ENCODE measurements at regions of chr15 and their contacts with region 1.

Region 1: GRCh38 chr15:66504563-66505429 is at the starts of genes RPL4 and ZWILCH:
- DNase-seq: peak; percentile 84 to 89
- ATAC-seq: peak; percentile 90 to 96 (median 92)
- H3K4me3 ChIP-seq: peak within 1 kb of the TSS; percentile 85
- H3K27ac ChIP-seq: peak within 1 kb of the TSS; percentile 96
- H3K4me1 ChIP-seq: peaks cover 22% of the 10 kb centered on the region
- H3K27me3 ChIP-seq: no peaks in the 10 kb centered on the region
- CTCF ChIP-seq: peak; percentile 20
- total RNA-seq, gene RPL4: 1,435 to 2,180 (median 2,033) TPM
- total RNA-seq, gene ZWILCH: 2.2 to 4.2 (median 2.6) TPM

Region 2: GRCh38 chr15:66386204-66387123 is 118.3 kb before region 1 on chr15 and contains the start of gene MAP2K1:
- intact Hi-C with region 1: loop called in 1 of 2 experiments (anchors 2 kb)
- DNase-seq: peak; percentile 99
- ATAC-seq: peak; percentile 96 to 97 (median 96)
- H3K4me3 ChIP-seq: peak within 1 kb of the TSS; percentile 94
- H3K27ac ChIP-seq: peak within 1 kb of the TSS; percentile 95
- H3K4me1 ChIP-seq: peaks cover 43% of the 10 kb centered on the region
- H3K27me3 ChIP-seq: no peaks in the 10 kb centered on the region
- CTCF ChIP-seq: peak; percentile 68
- total RNA-seq, gene MAP2K1: 56.3 to 90.0 (median 64.8) TPM